ENCODE measurements at regions of chrX and their contacts with region 1.

Region 1: DNA sequence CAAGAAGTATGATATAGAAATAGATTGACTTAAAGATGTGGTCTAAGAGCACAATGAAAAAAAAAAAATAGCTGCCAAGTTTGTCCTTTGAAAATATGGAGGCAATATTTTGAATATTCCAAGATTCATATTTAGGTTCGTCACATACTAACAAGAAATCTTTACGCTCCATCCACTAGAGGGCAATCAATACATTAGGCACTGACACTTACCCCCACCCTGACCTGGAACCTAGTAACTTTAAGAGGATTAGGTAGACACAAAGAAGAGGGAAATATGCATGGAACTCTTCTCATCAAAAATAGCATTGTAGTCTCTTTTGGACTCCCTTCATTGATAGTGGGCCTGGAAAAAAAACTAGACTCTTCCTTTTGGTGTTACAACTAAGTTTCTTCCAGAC is 1108.1 kb downstream of the PCDH19 start:
- DNase-seq: peak; percentile 29
- H3K4me3 ChIP-seq: no peak overlapping the region
- H3K27ac ChIP-seq: no peak overlapping the region
- H3K4me1 ChIP-seq: no peaks in the 10 kb centered on the region
- H3K27me3 ChIP-seq: no peaks in the 10 kb centered on the region
- CTCF ChIP-seq: peak; percentile 47; the same call in 1 of the 2 replicates

Region 2: GRCh38 chrX:99445336-99445735 is 143.3 kb after region 1 on chrX:
- CTCF ChIA-PET with region 1: no interaction called
- POLR2A ChIA-PET with region 1: no interaction called
- intact Hi-C with region 1: no loop called
- DNase-seq: no peak
- H3K4me3 ChIP-seq: no peak overlapping the region
- H3K27ac ChIP-seq: no peak overlapping the region
- H3K4me1 ChIP-seq: no peaks in the 10 kb centered on the region
- H3K27me3 ChIP-seq: no peaks in the 10 kb centered on the region
- CTCF ChIP-seq: no peak

Region 3: DNA sequence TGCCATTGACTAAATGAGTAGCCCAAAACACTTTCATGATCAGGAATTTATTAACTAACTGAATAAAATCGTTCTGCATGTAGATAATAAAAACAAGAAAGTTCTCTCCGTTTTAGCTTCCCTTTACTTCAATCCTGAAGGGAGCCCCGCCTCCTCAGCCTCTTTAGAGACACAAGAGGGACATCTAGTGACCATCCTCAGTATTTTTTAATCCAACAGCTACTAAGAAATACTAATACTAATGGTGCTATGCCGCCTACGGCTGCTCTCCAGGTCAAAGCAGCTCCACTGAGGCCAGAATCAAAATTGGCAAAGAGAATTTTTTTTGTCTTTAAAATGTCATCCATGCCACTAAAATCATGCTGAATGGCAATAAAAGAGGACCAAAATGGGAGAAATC is 1111.2 kb after region 1 on chrX:
- CTCF ChIA-PET with region 1: no interaction called
- POLR2A ChIA-PET with region 1: no interaction called
- intact Hi-C with region 1: loop called (anchors 10 kb)
- DNase-seq: peak; percentile 77
- H3K4me3 ChIP-seq: no peak overlapping the region
- H3K27ac ChIP-seq: no peak overlapping the region
- H3K4me1 ChIP-seq: no peaks in the 10 kb centered on the region
- H3K27me3 ChIP-seq: peaks cover 42% of the 10 kb centered on the region
- CTCF ChIP-seq: peak; percentile 63